Heart left ventricle (tissue), 16 donors: ENCODE measurements at regions of chr13 and their contacts with region 1.

Region 1: GRCh38 chr13:102779436-102780159 is 6.0 kb upstream of the TEX30 start:
- DNase-seq: no peak
- ATAC-seq: no peak
- H3K4me3 ChIP-seq: no peak overlapping the region
- H3K27ac ChIP-seq: peak overlapping the region in 1 of 12 donors; percentile 5
- H3K4me1 ChIP-seq: peaks cover 0 to 5% (median 0%) of the 10 kb centered on the region in 12 donors
- H3K27me3 ChIP-seq: no peaks in the 10 kb centered on the region
- CTCF ChIP-seq: no peak
- POLR2A ChIP-seq: no peak

Region 2: DNA sequence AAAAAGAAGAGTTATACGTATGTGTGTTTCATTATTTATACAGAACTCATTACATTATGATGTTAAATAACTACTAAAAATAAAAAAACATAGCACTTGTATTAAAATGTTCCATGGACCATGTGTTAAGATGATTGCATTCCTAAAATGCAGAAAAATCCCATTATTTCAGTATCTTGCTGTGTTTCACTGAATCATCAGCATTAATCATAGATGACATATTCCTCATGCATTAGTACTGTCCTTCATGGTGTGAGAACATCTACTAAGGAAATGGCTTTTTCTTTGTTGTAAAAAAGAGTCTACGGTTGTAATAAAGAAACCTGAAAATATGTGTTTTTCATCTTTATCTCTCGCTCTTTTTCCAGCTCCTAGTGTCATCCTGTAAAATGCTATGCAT is 794.3 kb before region 1 on chr13:
- intact Hi-C with region 1: loop called in 1 of 10 experiments (anchors 10 kb)
- DNase-seq: no peak
- ATAC-seq: no peak
- H3K4me3 ChIP-seq: no peak overlapping the region
- H3K27ac ChIP-seq: no peak overlapping the region
- H3K4me1 ChIP-seq: peaks cover 0 to 6% (median 0%) of the 10 kb centered on the region in 12 donors
- H3K27me3 ChIP-seq: no peaks in the 10 kb centered on the region
- CTCF ChIP-seq: no peak
- POLR2A ChIP-seq: no peak

Region 3: DNA sequence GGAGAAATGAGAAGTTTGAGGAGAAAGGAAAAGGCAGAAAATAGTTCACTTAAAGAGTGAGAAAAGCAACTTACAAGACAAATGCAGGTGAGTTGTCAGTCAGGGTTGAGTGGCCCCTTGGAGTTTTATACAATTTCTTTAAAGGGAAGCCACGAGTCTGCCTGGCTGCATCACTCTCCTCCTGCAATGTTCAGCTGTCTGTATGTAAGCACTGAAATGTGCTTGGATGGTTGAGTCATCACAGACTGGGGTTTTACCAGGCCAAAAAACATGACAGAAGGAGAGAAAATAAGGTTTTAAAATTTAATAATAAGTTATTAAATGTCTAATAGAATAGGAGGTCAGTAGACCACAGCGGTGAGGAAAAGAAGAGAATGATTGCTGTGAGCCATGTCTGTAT is 326.8 kb before region 1 on chr13:
- intact Hi-C with region 1: no loop called
- DNase-seq: no peak
- ATAC-seq: no peak
- H3K4me3 ChIP-seq: no peak overlapping the region
- H3K27ac ChIP-seq: no peak overlapping the region
- H3K4me1 ChIP-seq: no peaks in the 10 kb centered on the region
- H3K27me3 ChIP-seq: no peaks in the 10 kb centered on the region
- CTCF ChIP-seq: no peak
- POLR2A ChIP-seq: no peak

Region 4: GRCh38 chr13:102830646-102831045 is 51.0 kb after region 1 on chr13:
- intact Hi-C with region 1: loop called in 1 of 10 experiments (anchors 5 kb)
- DNase-seq: no peak
- ATAC-seq: peak in 1 of 4 donors; percentile 53
- H3K4me3 ChIP-seq: no peak overlapping the region
- H3K27ac ChIP-seq: no peak overlapping the region
- H3K4me1 ChIP-seq: peaks cover 0 to 9% (median 1%) of the 10 kb centered on the region in 12 donors
- H3K27me3 ChIP-seq: no peaks in the 10 kb centered on the region
- CTCF ChIP-seq: no peak
- POLR2A ChIP-seq: no peak